Mammary epithelial cell (primary cell): ENCODE measurements at regions of chr3 and their contacts with region 1.

Region 1: DNA sequence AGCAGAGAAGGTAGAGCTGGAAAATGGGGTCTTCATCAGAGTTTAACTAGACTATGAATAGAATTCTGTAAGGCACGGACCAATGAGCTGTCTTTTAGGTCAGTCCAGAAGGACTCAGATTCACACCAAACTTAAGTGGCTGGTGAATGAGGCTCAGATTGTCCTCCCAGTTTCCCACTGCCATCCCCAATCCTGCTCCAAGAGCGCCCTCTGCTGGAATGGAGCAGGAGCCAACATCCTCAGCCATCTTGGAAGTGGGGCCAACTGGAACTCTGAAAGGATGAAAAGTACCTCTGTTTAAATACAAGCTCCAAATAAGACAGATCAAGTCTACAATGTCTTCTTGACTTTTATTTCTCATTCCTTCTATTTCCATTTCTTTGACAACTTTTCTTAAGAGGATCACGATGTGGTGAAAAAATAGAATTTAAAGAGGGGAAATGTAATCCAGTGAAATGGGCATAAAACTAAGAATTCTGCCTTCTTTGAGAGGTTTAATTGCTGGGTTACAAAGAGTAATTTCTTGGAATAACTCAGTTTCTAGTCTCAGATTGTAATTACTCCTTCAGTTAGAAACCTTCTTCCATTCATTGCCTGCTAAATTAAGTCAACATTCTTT is 217.1 kb upstream of the TPRG1 start:
- DNase-seq: peak; percentile 72
- H3K4me3 ChIP-seq: no peak overlapping the region
- H3K27ac ChIP-seq: no peak overlapping the region
- H3K4me1 ChIP-seq: peaks cover 11% of the 10 kb centered on the region
- H3K27me3 ChIP-seq: no peaks in the 10 kb centered on the region
- CTCF ChIP-seq: peak; percentile 93 to 98

Region 2: GRCh38 chr3:188037216-188037718 is 917.4 kb before region 1 on chr3:
- CTCF ChIA-PET with region 1: no interaction called
- dilution Hi-C with region 1: no loop called
- in situ Hi-C with region 1: loop called (anchors 25 kb)
- intact Hi-C with region 1: loop called (anchors 2 kb)
- DNase-seq: peak; percentile 48
- H3K4me3 ChIP-seq: no peak overlapping the region
- H3K27ac ChIP-seq: no peak overlapping the region
- H3K4me1 ChIP-seq: peaks cover 11% of the 10 kb centered on the region
- H3K27me3 ChIP-seq: no peaks in the 10 kb centered on the region
- CTCF ChIP-seq: peak; percentile 40 to 58

Region 3: GRCh38 chr3:188526057-188526456 is 428.6 kb before region 1 on chr3:
- CTCF ChIA-PET with region 1: no interaction called
- dilution Hi-C with region 1: no loop called
- in situ Hi-C with region 1: no loop called
- intact Hi-C with region 1: loop called (anchors 5 kb)
- DNase-seq: no peak
- H3K4me3 ChIP-seq: no peak overlapping the region
- H3K27ac ChIP-seq: no peak overlapping the region
- H3K4me1 ChIP-seq: peaks cover 3% of the 10 kb centered on the region
- H3K27me3 ChIP-seq: no peaks in the 10 kb centered on the region
- CTCF ChIP-seq: no peak

Region 4: GRCh38 chr3:188749010-188749617 is 205.6 kb before region 1 on chr3:
- CTCF ChIA-PET with region 1: interaction called, 3 read pairs
- dilution Hi-C with region 1: no loop called
- in situ Hi-C with region 1: no loop called
- intact Hi-C with region 1: loop called (anchors 2 kb)
- DNase-seq: no peak
- H3K4me3 ChIP-seq: no peak overlapping the region
- H3K27ac ChIP-seq: no peak overlapping the region
- H3K4me1 ChIP-seq: no peaks in the 10 kb centered on the region
- H3K27me3 ChIP-seq: no peaks in the 10 kb centered on the region
- CTCF ChIP-seq: peak; percentile 70 to 83

Region 5: DNA sequence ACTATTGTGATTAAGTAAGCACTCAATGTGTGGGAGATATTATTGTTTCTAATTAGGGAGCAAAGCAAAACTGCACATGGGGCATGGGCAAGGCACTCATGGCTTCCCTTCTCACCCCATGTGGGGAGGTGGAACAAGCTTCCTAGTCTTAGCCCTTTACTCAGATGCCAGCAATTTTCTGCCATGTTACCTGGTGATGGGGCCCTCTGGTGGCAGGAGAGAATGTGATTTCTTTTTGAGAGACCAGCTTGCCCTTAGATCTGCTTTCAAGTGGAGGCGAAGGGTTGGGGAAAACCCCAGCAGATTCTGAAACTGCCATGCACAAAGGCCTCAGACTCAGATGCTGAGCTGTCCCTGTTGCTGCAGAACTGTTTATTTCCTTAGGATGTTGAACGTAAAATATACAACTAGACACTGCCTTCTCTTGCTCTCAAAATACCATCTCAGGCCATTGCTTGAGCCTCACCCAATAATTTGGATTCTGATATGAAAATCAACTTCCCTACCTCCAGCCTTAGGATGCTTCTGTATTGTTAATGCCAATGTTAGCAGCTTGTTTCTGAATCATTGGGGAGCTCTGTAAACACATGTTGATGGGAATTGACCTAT is 86.9 kb after region 1 on chr3:
- CTCF ChIA-PET with region 1: interaction called, 4 read pairs
- dilution Hi-C with region 1: no loop called
- in situ Hi-C with region 1: no loop called
- intact Hi-C with region 1: loop called (anchors 2 kb)
- DNase-seq: peak; percentile 73
- H3K4me3 ChIP-seq: no peak overlapping the region
- H3K27ac ChIP-seq: no peak overlapping the region
- H3K4me1 ChIP-seq: no peaks in the 10 kb centered on the region
- H3K27me3 ChIP-seq: no peaks in the 10 kb centered on the region
- CTCF ChIP-seq: peak; percentile 64 to 70